Activated CD4-positive, alpha-beta T cell treated with anti-CD3 and anti-CD28 coated beads for 36 hours (primary cell): ENCODE measurements at regions of chr2 and their contacts with region 1.

Region 1: DNA sequence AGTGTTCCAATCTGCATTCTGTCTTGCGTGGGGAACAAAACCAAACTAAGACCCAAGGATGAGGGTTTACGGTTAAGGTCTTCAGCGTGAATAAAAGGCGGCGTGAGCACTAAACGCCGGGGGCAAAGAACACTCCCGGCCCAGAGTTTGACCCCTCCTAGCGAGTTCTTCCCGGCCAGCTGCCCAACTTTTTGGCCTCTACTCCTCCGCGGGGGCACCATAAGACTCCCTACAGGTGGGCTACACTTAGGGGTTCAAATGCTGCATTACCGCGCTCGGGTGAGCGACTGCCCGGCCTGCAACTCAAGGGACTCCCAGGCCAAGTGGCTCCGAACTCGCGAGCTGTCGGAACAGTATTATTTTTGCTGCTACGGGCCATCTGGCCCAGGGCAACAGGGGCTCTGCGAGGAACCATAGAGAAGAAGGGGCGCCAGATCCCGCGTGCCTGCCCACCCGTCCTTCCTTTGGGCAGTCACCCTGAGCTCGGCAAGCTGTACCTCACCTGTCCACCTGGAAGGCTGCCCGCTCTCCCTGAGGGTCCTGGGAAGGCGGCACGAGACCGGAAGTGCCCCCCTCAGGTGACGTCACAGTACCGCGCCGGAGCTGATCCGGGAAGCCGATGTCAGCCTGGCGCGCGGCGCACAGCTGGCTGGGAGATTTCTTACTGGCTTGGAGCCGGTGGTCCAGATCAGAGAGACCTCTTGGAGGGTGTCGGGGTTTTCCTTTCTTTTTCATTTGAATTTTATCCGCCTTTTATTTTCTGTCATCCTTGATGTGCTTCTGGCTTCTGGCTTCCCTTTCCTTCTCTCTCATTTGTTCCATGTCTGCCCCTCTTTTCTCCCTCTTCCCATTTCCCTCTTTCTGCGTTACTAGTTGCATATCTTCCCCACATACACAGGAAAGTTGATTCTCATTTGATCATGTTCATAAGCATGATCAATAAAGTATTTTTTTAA is at the start of gene LDAH:
- DNase-seq: peak; percentile 92
- ATAC-seq: peak; percentile 79
- H3K4me3 Mint-ChIP-seq: peak within 1 kb of the TSS; percentile 98
- H3K27ac Mint-ChIP-seq: peak within 1 kb of the TSS; percentile 99
- H3K4me1 Mint-ChIP-seq: peaks cover 26% of the 10 kb centered on the region
- H3K27me3 Mint-ChIP-seq: no peaks in the 10 kb centered on the region
- total RNA-seq, gene LDAH: 27.0 to 32.8 TPM

Region 2: DNA sequence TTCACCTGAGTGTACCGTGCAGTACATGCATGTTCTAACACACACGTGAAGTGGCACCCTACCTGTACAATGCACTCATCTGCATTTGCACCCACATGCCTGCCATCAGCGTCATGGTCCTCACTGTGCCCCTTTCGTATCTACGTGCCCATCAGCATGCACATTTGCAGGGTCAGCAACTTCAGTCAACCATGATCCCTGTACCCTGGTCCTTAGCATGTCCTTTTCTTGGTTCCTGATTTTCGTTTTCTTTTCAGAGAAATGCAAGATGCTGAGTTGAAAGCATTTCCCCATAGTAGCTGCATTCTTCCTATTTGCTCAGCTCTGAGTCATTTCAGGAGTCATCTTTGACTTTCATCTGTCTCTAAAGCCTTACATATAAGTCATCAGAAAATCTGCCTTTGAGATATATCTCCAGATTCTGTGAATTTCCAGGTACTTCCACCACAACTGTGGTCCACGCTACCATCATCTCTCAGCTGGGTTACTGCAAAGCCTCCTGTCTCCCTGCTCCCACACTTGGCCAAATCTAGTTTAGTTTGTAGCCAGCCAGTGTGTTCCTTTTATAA is 457.5 kb before region 1 on chr2:
- CTCF ChIA-PET with region 1: no interaction called
- POLR2A ChIA-PET with region 1: no interaction called
- intact Hi-C with region 1: loop called (anchors 1 to 10 kb)
- DNase-seq: peak; percentile 80
- ATAC-seq: peak; percentile 69
- H3K4me3 Mint-ChIP-seq: peak overlapping the region; percentile 3
- H3K27ac Mint-ChIP-seq: peak overlapping the region; percentile 86
- H3K4me1 Mint-ChIP-seq: peaks cover 26% of the 10 kb centered on the region
- H3K27me3 Mint-ChIP-seq: peaks cover 13% of the 10 kb centered on the region

Region 3: GRCh38 chr2:20446917-20447436 is 375.8 kb before region 1 on chr2 and contains the start of gene RHOB:
- CTCF ChIA-PET with region 1: no interaction called
- POLR2A ChIA-PET with region 1: no interaction called
- intact Hi-C with region 1: loop called in 1 of 2 experiments (anchors 5 kb)
- DNase-seq: peak; percentile 93
- ATAC-seq: peak; percentile 99
- H3K4me3 Mint-ChIP-seq: peak within 1 kb of the TSS; percentile 71
- H3K27ac Mint-ChIP-seq: no peak within 1 kb of the TSS
- H3K4me1 Mint-ChIP-seq: no peaks in the 10 kb centered on the region
- H3K27me3 Mint-ChIP-seq: peaks cover 23% of the 10 kb centered on the region
- total RNA-seq, gene RHOB: 7.5 TPM

Region 4: GRCh38 chr2:20457653-20458630 is 364.9 kb before region 1 on chr2:
- CTCF ChIA-PET with region 1: no interaction called
- POLR2A ChIA-PET with region 1: no interaction called
- intact Hi-C with region 1: no loop called
- DNase-seq: no peak
- ATAC-seq: no peak
- H3K4me3 Mint-ChIP-seq: no peak overlapping the region
- H3K27ac Mint-ChIP-seq: no peak overlapping the region
- H3K4me1 Mint-ChIP-seq: peaks cover 9% of the 10 kb centered on the region
- H3K27me3 Mint-ChIP-seq: peaks cover 36% of the 10 kb centered on the region

Region 5: GRCh38 chr2:20650880-20651730 is 171.7 kb before region 1 on chr2 and contains the start of gene HS1BP3:
- CTCF ChIA-PET with region 1: interaction called, 3 read pairs
- POLR2A ChIA-PET with region 1: interaction called, 6 read pairs
- intact Hi-C with region 1: loop called in 1 of 2 experiments (anchors 1 kb)
- DNase-seq: peak; percentile 92
- ATAC-seq: peak; percentile 97
- H3K4me3 Mint-ChIP-seq: peak within 1 kb of the TSS; percentile 78
- H3K27ac Mint-ChIP-seq: peak within 1 kb of the TSS; percentile 86
- H3K4me1 Mint-ChIP-seq: peaks cover 22% of the 10 kb centered on the region
- H3K27me3 Mint-ChIP-seq: no peaks in the 10 kb centered on the region
- total RNA-seq, gene HS1BP3: 6.2 to 7.1 TPM

Region 6: DNA sequence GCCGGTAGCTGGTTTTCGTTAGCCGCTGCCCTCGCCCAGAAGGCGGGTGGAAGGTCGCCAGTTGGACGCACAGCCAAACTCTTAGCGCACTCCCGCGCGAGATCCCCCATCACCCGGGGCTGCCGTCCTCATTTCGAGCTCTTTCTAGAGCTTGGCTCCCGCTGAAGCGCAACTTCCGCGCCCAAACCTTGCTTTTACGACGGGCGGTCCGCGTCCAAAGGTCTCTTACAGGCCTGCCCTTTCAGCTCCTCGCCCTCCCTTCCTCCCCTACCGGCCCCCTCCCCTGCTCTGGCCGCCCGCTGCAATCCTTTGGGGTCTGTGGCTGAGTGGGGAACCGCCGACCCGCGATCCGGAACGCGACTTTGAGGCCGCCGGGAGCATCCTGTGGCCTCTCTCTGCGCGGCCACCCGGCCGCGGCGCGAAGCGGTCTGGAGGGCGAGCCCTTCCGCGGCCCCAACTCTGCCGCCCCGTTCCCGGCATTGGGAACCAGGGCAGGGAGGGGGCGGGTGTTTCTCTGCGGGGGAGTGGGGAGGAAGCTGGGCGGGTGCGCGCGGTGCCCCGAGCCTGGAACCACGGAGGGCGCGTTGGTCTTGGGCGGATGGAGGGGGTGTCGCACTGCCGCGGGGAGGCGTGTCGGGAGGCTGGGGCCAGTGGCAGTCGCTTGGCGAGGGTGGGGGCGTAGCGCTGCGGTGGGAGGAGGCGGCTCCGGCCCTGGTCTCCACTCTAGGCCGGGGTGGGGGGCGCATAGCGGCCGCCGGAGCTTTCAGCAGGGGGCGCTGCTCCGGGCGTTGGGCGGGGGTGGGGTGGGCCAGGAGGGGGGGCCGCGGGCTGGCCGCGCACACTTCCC is 156.3 kb before region 1 on chr2 and contains the start of gene GDF7:
- CTCF ChIA-PET with region 1: interaction called, 5 read pairs
- POLR2A ChIA-PET with region 1: no interaction called
- intact Hi-C with region 1: loop called (anchors 5 to 10 kb)
- DNase-seq: peak; percentile 41
- ATAC-seq: peak; percentile 23
- H3K4me3 Mint-ChIP-seq: peak within 1 kb of the TSS; percentile 69
- H3K27ac Mint-ChIP-seq: no peak within 1 kb of the TSS
- H3K4me1 Mint-ChIP-seq: peaks cover 3% of the 10 kb centered on the region
- H3K27me3 Mint-ChIP-seq: peaks cover 55% of the 10 kb centered on the region
- total RNA-seq, gene GDF7: 0.02 TPM in 1 of 2 experiments, not detected in the other

Region 7: GRCh38 chr2:20868377-20868776 is 45.6 kb after region 1 on chr2:
- CTCF ChIA-PET with region 1: no interaction called
- POLR2A ChIA-PET with region 1: no interaction called
- intact Hi-C with region 1: loop called in 1 of 2 experiments (anchors 2 kb)
- DNase-seq: peak; percentile 89
- ATAC-seq: peak; percentile 99
- H3K4me3 Mint-ChIP-seq: no peak overlapping the region
- H3K27ac Mint-ChIP-seq: no peak overlapping the region
- H3K4me1 Mint-ChIP-seq: peaks cover 11% of the 10 kb centered on the region
- H3K27me3 Mint-ChIP-seq: peaks cover 41% of the 10 kb centered on the region

Region 8: GRCh38 chr2:21404827-21405625 is 582.2 kb after region 1 on chr2:
- CTCF ChIA-PET with region 1: no interaction called
- POLR2A ChIA-PET with region 1: no interaction called
- intact Hi-C with region 1: no loop called
- DNase-seq: no peak
- ATAC-seq: no peak
- H3K4me3 Mint-ChIP-seq: no peak overlapping the region
- H3K27ac Mint-ChIP-seq: no peak overlapping the region
- H3K4me1 Mint-ChIP-seq: no peaks in the 10 kb centered on the region
- H3K27me3 Mint-ChIP-seq: no peaks in the 10 kb centered on the region